ENCODE measurements at regions of chr17 and their contacts with region 1.

Region 1: GRCh38 chr17:34361478-34362061 is 1.5 kb downstream of the CCL1 start:
- DNase-seq: peak; percentile 84
- CTCF ChIP-seq: peak; percentile 98

Region 2: DNA sequence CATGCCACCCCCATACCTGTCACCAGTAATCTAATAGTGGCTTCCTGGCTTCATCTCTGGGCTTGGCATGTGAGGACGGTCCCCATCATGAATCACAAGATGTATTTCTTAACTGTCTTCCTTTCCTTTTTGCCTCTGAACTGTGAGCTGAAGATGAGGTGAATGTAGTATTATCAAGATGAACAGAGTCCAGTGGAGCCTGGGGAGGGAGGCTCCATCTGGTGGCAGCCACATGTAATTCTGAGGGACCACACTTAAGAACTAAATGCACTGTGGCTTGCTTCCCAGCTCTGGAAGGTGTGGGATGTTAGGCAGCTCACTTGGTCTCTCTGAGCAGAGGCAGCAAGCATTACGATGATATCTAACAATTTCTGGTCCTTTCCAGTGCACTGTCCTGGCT is 713.6 kb before region 1 on chr17:
- in situ Hi-C with region 1: no loop called
- DNase-seq: no peak
- CTCF ChIP-seq: no peak

Region 3: GRCh38 chr17:33976831-33977230 is 384.7 kb before region 1 on chr17:
- in situ Hi-C with region 1: no loop called
- DNase-seq: no peak
- CTCF ChIP-seq: no peak

Region 4: DNA sequence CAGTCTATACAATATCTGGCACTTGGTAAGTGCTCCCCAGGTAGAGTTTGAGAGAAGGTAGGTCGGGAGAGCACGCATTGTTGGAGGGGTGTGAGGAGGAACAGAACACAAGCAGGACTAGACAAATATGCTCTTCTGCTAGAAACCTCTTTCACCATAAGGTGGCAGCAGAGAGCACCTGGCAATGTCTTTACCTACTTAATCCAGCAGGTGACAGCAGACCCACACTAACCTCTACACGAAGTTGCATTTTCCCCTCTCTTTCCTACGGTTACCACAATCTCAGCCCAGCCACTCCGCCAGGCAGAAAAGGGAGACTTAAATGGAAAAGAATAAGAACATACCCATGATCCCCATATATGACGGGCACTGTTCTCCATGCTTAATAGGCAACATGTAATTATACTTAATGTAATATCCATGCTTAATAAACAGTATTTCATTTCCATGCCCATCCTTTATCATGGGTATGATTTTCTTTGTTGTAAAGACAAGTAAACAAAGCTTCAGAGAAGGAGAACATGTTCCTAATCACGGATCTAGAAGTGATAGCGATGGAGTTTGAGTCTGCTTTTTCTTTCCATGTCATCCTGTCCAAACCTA is 161.5 kb before region 1 on chr17:
- in situ Hi-C with region 1: loop called (anchors 5 kb)
- DNase-seq: peak; percentile 72
- CTCF ChIP-seq: peak; percentile 96

Region 5: GRCh38 chr17:34423978-34424813 is 62.6 kb after region 1 on chr17:
- in situ Hi-C with region 1: no loop called
- DNase-seq: no peak
- CTCF ChIP-seq: no peak